ENCODE measurements at regions of chr2 and their contacts with region 1.

Region 1: DNA sequence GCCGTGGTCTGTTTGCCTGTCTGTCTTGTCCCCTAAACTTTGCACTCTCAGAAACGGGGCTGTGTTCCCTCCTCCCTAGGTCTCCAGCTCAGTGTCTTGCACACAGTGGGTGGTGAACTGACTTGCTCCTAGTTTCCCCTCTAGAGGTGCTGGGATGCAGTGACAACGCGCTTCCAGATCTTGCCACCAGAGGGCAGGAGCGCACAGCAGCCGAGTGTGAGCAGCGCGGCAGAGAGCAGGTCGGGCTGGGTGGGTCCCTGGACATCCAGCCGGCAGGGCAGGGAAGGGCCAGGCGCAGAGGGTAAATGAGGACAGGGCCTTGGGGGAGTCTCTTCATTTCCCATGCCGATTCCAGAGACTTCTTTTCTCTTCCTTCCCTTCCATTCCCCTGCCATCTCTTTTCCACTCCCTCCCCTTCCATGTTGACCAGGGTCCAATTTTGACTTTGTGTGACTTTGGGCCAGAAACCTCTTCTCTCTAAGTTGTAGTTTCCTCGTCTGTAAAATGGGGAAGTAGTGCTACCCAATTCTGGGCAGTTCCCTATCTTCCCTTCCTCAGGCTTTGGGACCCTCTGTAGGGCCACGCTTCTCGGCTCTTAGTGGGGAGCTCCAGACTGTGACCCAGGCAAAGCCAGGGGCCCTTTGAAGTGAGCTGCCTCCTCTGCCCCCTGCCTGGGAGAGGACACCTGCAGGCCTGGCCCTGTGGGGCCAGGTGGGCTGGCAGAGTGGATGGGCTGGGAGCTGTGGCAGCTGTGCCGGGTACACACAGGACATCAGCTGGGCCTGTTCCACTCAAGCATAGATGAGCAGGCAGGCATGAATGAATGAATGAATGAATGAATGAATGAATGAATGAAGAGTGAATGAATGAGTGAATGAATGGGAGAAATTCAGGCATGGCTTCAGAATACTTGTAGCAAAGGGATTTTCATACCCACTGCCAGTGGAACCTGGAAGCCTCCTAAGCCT is 43.3 kb upstream of the TAF1B start:
- DNase-seq: peak; percentile 76 to 84 (median 79)
- H3K4me3 ChIP-seq: peak overlapping the region in 1 of 2 donors; percentile 21
- H3K4me3 Mint-ChIP-seq: peak overlapping the region; percentile 71 to 96 (median 89)
- H3K27ac ChIP-seq: peak overlapping the region; percentile 75
- H3K27ac Mint-ChIP-seq: peak overlapping the region; percentile 92 to 98 (median 93)
- H3K4me1 ChIP-seq: peaks cover 36% of the 10 kb centered on the region
- H3K4me1 Mint-ChIP-seq: peaks cover 21 to 48% (median 33%) of the 10 kb centered on the region in 4 donors
- H3K27me3 ChIP-seq: no peaks in the 10 kb centered on the region
- H3K27me3 Mint-ChIP-seq: no peaks in the 10 kb centered on the region

Region 2: GRCh38 chr2:9205963-9206948 is 593.7 kb before region 1 on chr2 and contains the start of gene ASAP2:
- CTCF ChIA-PET with region 1: no interaction called
- POLR2A ChIA-PET with region 1: no interaction called
- intact Hi-C with region 1: loop called (anchors 5 kb)
- DNase-seq: peak in 3 of 5 donors; percentile 10 to 26 (median 12)
- H3K4me3 ChIP-seq: peak within 1 kb of the TSS; percentile 12 to 32
- H3K4me3 Mint-ChIP-seq: peak within 1 kb of the TSS; percentile 31 to 69 (median 44)
- H3K27ac ChIP-seq: no peak within 1 kb of the TSS
- H3K27ac Mint-ChIP-seq: no peak within 1 kb of the TSS
- H3K4me1 ChIP-seq: peaks cover 12% of the 10 kb centered on the region
- H3K4me1 Mint-ChIP-seq: peaks cover 4 to 13% (median 6%) of the 10 kb centered on the region in 4 donors
- H3K27me3 ChIP-seq: peaks cover 11% of the 10 kb centered on the region
- H3K27me3 Mint-ChIP-seq: peaks cover 27 to 39% of the 10 kb centered on the region in 2 donors
- total RNA-seq, gene ASAP2: not detected

Region 3: GRCh38 chr2:9708683-9709538 is 91.0 kb before region 1 on chr2:
- CTCF ChIA-PET with region 1: no interaction called
- POLR2A ChIA-PET with region 1: no interaction called
- intact Hi-C with region 1: no loop called
- DNase-seq: peak in 1 of 5 donors; percentile 11
- H3K4me3 ChIP-seq: no peak overlapping the region
- H3K4me3 Mint-ChIP-seq: peak overlapping the region in 4 of 8 donors; percentile 4 to 75 (median 38)
- H3K27ac ChIP-seq: peak overlapping the region; percentile 38
- H3K27ac Mint-ChIP-seq: peak overlapping the region; percentile 3 to 94 (median 85)
- H3K4me1 ChIP-seq: peaks cover 55% of the 10 kb centered on the region
- H3K4me1 Mint-ChIP-seq: peaks cover 26 to 73% (median 51%) of the 10 kb centered on the region in 4 donors
- H3K27me3 ChIP-seq: no peaks in the 10 kb centered on the region
- H3K27me3 Mint-ChIP-seq: no peaks in the 10 kb centered on the region

Region 4: DNA sequence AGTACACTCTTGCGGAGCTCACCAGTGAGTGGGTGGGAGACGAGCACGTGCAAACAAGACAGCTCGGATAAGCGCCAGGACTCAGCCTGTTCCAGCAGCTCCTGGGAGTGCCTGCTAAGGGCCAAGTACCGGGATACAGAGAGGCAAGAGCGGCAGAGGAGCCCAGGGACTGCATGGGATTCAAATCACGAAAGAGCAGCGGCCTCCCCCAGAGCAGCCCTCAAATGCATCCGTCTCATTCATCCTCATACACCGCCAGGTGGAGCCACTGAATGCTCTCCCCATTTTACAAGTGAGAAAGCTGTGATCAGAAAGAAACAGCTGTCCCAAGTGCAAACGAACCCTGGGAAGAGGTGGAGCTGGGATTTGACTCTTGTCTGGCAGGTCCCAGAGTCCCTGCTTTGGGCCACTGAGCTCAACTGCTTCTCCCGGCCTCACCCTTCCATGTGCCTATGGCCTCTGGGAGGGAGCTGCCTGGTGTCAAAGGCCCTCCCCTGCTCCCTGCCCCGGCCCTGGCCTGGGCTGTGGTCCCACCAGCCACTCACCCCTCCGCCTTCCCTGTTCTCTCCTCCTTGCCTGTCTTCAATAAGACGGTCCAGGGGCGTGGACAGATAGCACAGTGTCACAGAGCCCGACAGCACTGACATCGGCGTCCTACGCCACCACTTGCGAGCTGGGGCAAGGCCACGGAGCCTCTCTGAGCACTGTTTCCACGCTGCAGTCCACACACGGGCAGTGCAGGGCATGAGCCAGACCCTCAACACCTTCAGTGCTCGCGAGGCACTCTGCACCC is 29.4 kb before region 1 on chr2:
- CTCF ChIA-PET with region 1: interaction called, 24 read pairs
- POLR2A ChIA-PET with region 1: interaction called, 3 read pairs
- intact Hi-C with region 1: no loop called
- DNase-seq: peak; percentile 49 to 63 (median 58)
- H3K4me3 ChIP-seq: no peak overlapping the region
- H3K4me3 Mint-ChIP-seq: peak overlapping the region in 1 of 8 donors; percentile 55
- H3K27ac ChIP-seq: no peak overlapping the region
- H3K27ac Mint-ChIP-seq: peak overlapping the region in 5 of 7 donors; percentile 15 to 88 (median 46)
- H3K4me1 ChIP-seq: peaks cover 20% of the 10 kb centered on the region
- H3K4me1 Mint-ChIP-seq: peaks cover 3 to 21% (median 13%) of the 10 kb centered on the region in 4 donors
- H3K27me3 ChIP-seq: no peaks in the 10 kb centered on the region
- H3K27me3 Mint-ChIP-seq: no peaks in the 10 kb centered on the region

Region 5: DNA sequence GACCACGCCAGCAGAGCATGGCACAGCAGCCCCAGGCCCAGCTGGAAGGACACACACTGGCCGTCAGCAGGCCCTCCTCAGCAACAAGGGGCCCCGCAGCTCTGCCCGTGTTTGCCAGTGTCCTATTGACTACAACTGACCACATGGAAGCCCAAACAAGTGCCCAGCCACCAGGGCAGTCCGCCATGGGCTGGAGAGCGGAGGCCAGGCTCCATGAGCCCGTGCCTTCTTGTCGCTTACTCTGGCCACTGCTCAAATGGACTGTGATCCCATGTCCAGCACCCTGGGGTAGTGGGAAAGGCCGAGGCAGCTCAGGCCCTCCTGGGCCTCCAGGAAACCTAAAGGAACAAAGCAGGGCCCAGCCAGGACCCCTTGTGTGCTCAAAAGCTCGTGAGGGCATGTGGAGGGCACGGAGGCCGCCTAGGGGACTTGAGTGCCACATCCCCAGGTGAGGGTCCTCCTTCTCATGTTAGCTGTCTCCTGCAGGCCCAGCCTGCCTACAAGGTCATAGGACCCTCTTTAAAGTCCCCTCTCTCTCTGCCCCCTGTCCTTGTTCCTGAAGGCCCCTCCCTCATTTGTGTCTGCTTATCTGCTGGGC is 10.5 kb before region 1 on chr2:
- CTCF ChIA-PET with region 1: interaction called, 52 read pairs
- POLR2A ChIA-PET with region 1: interaction called, 4 read pairs
- intact Hi-C with region 1: no loop called
- DNase-seq: no peak
- H3K4me3 ChIP-seq: no peak overlapping the region
- H3K4me3 Mint-ChIP-seq: peak overlapping the region in 1 of 8 donors; percentile 52
- H3K27ac ChIP-seq: no peak overlapping the region
- H3K27ac Mint-ChIP-seq: no peak overlapping the region
- H3K4me1 ChIP-seq: peaks cover 3% of the 10 kb centered on the region
- H3K4me1 Mint-ChIP-seq: peaks cover 3 to 15% (median 9%) of the 10 kb centered on the region in 4 donors
- H3K27me3 ChIP-seq: no peaks in the 10 kb centered on the region
- H3K27me3 Mint-ChIP-seq: no peaks in the 10 kb centered on the region

Region 6: GRCh38 chr2:9843229-9844035 is 43.5 kb after region 1 on chr2 and contains the start of gene TAF1B:
- CTCF ChIA-PET with region 1: interaction called, 19 read pairs
- POLR2A ChIA-PET with region 1: interaction called, 21 read pairs
- intact Hi-C with region 1: no loop called
- DNase-seq: peak; percentile 82 to 84 (median 83)
- H3K4me3 ChIP-seq: peak within 1 kb of the TSS; percentile 85 to 92
- H3K4me3 Mint-ChIP-seq: peak within 1 kb of the TSS; percentile 91 to 97 (median 94)
- H3K27ac ChIP-seq: peak within 1 kb of the TSS; percentile 76
- H3K27ac Mint-ChIP-seq: peak within 1 kb of the TSS; percentile 82 to 97 (median 93)
- H3K4me1 ChIP-seq: peaks cover 41% of the 10 kb centered on the region
- H3K4me1 Mint-ChIP-seq: peaks cover 32 to 50% (median 40%) of the 10 kb centered on the region in 4 donors
- H3K27me3 ChIP-seq: no peaks in the 10 kb centered on the region
- H3K27me3 Mint-ChIP-seq: no peaks in the 10 kb centered on the region
- total RNA-seq, gene TAF1B: 23.5 to 23.9 TPM

Measured in CD4-positive, alpha-beta memory T cell (primary cell).